Lower leg skin (tissue), 4 donors: ENCODE measurements at regions of chr11 and their contacts with region 1.

Region 1: DNA sequence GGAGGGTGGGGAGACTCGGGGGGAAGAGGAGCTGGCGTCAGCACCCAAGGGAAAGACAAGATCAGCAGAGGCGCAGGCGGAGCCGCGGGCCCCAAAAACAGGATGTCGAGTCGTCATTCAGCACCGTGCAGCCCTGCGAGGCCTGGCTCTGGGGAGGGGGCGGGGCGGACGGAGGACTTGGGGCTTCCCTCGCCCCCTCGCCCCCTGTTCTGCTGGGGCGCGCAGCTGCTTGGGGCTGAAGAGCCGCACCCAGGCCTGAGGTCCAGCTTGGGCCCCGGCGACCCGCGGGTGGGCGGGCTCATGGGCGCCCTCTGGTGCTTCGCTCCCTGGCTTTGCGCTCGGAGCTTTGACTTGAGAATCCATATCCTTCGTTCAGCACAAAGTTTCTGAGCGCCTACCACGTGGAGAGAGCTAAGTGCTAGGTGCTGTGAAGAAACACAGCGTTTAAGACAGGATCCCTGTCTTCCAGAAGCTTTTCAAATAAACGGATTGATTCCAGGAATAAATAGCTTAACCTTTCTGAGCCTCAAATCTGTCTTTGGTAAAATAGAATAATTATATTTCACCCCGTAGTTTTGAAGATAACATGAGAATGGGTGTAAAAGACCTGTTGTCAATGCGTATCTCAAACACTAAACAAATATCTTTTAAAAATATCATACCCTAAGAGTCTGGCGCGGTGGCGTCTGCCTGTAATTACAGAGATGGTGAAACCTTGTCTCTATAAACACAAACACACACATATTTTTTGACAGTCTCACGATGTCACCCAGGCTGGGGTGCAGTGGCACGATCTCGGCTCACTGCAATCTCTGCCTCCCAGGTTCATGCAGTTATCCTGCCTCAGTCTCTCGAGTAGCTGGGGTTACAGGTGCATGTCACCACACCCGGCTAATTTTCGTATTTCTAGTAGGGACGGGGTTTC is 929 bp upstream of the RHOG start:
- DNase-seq: peak in 1 of 2 donors; percentile 79
- H3K4me3 ChIP-seq: peak overlapping the region; percentile 62
- CTCF ChIP-seq: no peak
- POLR2A ChIP-seq: no peak

Region 2: DNA sequence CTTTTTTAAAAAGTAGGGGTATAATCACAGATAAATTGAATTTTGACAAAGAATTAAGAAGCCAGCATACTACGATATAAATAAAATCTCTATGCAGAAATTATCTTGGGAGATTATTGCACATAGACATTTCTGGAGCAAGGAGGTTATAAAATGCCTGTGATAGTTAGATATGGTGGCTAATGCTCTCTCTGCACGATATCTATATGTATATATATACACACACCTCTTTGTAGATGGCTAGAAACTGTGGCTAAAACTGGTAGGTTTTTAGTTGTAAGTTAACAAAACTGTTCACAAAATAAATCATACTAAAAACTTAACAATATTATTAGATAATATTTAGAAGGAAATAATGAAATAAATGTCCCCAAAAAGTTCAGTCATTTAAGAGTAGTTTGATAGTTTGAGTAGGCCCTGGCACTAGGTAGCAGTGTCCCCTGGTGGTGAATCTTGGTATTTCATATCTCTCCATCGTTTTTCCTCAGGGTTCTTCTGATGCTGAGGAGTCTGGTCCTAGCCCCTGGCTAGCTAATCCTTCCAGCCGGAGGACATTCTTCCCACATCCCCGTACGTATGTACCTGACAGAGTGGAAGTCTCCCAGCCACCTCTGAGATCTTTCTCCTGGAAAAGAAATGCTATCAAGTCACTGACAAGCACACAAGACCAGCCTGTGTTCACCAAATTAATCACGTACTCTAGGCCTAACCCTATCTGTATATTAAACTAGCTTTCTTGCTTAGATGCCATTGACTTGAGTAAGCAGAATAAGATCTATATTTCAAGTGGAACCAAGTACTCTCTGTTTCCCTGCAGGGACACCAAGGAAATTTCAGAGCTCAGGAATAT is 232.0 kb before region 1 on chr11:
- intact Hi-C with region 1: no loop called
- DNase-seq: peak in 1 of 2 donors; percentile 45
- H3K4me3 ChIP-seq: no peak overlapping the region
- CTCF ChIP-seq: peak in 1 of 3 donors; percentile 43
- POLR2A ChIP-seq: no peak

Region 3: GRCh38 chr11:4065601-4066377 is 224.1 kb after region 1 on chr11:
- intact Hi-C with region 1: loop called (anchors 5 kb)
- DNase-seq: no peak
- H3K4me3 ChIP-seq: no peak overlapping the region
- CTCF ChIP-seq: no peak
- POLR2A ChIP-seq: no peak